ENCODE measurements at regions of chr2 and their contacts with region 1.

Region 1: DNA sequence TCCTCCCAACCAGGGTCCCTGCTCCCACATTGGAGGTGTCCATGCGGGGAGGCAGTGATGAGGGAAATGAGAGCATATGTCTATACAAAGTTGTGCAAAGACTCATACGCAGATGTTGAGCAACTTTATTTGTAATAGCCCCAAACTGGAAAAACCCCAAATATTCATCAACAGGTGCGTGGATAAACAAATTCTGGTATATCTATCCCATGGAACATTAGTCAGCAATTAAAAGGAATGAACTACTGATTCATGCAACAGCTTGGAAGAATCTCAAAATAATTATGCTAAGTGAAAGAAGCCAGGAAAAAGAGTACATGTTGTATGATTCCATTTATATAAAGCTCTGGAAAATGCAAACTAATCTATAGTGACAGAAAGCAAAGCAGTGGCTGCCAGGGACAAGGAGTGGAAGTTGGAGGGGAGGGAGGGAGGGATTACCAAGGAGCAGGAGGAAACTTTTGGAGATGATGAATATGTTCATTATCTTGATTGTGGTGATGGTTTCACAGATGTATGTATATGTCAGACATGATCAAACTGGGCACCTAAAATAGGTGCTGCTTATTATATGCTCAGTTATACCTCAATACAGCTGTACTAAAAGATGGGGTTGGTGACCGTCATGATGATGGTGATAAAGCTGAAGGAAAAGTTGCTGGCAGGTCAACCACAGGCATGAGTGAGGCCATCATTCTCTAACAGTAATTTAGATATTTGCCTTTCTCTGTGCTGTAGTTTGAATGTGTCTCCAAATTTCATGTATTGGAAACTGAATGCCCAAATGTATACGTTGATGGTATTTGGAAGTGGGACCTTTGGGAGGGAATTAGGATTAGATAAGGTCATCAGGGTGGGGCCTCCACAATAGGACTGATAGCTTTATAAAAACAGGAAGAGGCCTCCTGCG is 270.9 kb downstream of the CYP26B1 start:
- DNase-seq: no peak
- H3K4me3 ChIP-seq: no peak overlapping the region
- H3K27ac ChIP-seq: no peak overlapping the region
- H3K4me1 ChIP-seq: no peaks in the 10 kb centered on the region; a peak in 1 of 7 replicates
- H3K27me3 ChIP-seq: no peaks in the 10 kb centered on the region
- CTCF ChIP-seq: no peak
- EP300 ChIP-seq: no peak
- POLR2A ChIP-seq: no peak
- RAD21 ChIP-seq: no peak

Region 2: GRCh38 chr2:71889991-71890684 is 13.3 kb after region 1 on chr2:
- CTCF ChIA-PET with region 1: interaction called, 11 read pairs
- POLR2A ChIA-PET with region 1: no interaction called
- DNase-seq: no peak
- H3K4me3 ChIP-seq: no peak overlapping the region
- H3K27ac ChIP-seq: no peak overlapping the region
- H3K4me1 ChIP-seq: no peaks in the 10 kb centered on the region
- H3K27me3 ChIP-seq: no peaks in the 10 kb centered on the region
- CTCF ChIP-seq: no peak
- EP300 ChIP-seq: no peak
- POLR2A ChIP-seq: no peak
- RAD21 ChIP-seq: no peak